GM10248 (cell line): ENCODE measurements at regions of chr3 and their contacts with region 1.

Region 1: GRCh38 chr3:15367059-15367458 is 34.7 kb upstream of the SH3BP5 start:
- DNase-seq: no peak
- CTCF ChIP-seq: no peak

Region 2: GRCh38 chr3:15377961-15378791 is 11.1 kb after region 1 on chr3:
- CTCF ChIA-PET with region 1: interaction called, 12 read pairs
- POLR2A ChIA-PET with region 1: no interaction called
- DNase-seq: peak; percentile 62
- CTCF ChIP-seq: peak; percentile 74